ENCODE measurements at regions of chr3 and their contacts with region 1.

Region 1: DNA sequence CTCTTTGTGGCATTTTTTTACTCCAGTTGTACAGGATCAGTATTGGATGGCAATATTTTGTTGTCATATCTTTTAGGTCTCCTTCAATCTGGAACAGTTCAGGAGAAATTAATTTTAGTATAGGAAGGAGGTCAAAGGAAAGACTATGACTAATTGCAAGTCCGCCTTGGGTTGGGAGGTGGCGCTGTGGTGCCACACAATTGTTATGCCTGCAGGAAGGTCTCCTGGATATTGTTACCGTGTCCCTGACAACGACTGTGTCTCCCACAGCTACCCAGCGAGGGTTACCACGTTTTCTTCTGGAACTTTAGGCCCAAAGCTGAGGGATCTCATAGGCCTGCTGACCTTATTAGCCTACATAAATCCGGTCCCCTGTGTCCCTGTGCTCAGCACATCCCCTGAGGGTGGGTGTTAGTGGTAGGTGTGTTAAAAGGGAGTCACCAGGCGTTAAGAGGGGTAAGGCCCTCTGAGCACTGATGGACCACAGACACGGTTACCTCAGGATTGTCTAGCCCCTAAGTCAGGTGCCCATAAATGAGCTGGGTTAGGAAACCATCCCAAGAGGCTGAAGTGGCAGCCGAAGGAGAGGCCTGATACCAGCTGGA is 31.5 kb downstream of the KCNAB1 start:
- DNase-seq: peak; percentile 75
- H3K4me3 ChIP-seq: no peak overlapping the region
- H3K27ac ChIP-seq: no peak overlapping the region
- H3K4me1 ChIP-seq: peaks cover 19% of the 10 kb centered on the region
- H3K27me3 ChIP-seq: peaks cover 0 to 1% of the 10 kb centered on the region in 2 experiments
- CTCF ChIP-seq: peak; percentile 77 to 81
- POLR2A ChIP-seq: no peak

Region 2: DNA sequence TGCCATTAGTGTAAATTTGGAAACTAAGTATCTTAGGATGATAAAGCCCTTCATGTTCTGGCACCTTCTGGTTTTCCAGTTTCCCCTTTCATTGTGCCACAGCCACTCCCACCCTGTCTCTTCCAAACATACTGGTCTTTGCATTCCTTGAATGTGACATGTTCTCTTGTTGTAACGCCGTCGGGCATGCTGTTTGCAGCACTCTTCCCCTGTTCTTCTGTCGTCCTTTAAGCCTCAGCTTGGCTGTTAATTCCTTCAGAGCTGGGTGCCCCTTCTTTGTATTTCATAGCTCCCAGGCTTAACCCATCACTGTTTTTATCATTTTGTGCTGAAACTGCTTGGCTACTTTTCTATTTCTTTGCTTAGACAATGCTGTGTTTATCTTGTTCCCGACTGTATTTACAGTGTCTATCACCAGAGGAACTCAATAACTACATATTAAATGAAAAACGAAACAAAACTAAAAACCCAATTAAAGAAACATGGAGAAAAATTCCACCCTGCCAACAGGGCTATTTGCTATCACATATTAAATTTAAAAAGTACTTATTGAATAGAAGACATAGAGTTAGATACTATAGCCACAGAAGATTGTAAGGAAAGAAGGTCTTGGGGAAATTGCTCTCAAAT is 126.9 kb before region 1 on chr3:
- CTCF ChIA-PET with region 1: no interaction called
- POLR2A ChIA-PET with region 1: no interaction called
- dilution Hi-C with region 1: no loop called
- intact Hi-C with region 1: no loop called
- DNase-seq: no peak
- H3K4me3 ChIP-seq: no peak overlapping the region
- H3K27ac ChIP-seq: no peak overlapping the region
- H3K4me1 ChIP-seq: no peaks in the 10 kb centered on the region
- H3K27me3 ChIP-seq: peaks cover 8 to 26% of the 10 kb centered on the region in 2 experiments
- CTCF ChIP-seq: no peak
- POLR2A ChIP-seq: no peak

Region 3: DNA sequence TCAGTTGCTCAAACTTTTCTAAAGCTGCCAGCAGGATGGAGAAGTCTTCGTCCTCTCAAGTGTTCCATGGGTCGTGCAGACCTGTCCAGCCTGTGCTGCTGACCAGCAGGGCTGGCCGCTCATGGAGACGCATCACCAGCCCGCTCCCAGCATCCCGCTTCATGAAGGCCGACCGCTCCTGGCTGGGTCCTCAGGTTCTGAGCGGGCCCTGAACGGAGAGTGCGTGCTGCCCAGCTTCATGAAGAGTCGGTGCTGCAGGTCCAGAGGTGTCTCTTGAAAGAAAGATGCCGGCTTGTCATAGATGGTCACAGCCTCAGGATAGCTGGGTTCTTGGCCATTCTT is 107.3 kb before region 1 on chr3:
- CTCF ChIA-PET with region 1: interaction called, 20 read pairs
- POLR2A ChIA-PET with region 1: no interaction called
- dilution Hi-C with region 1: no loop called
- intact Hi-C with region 1: loop called (anchors 1 kb)
- DNase-seq: no peak
- H3K4me3 ChIP-seq: no peak overlapping the region
- H3K27ac ChIP-seq: no peak overlapping the region
- H3K4me1 ChIP-seq: no peaks in the 10 kb centered on the region
- H3K27me3 ChIP-seq: no peaks in the 10 kb centered on the region
- CTCF ChIP-seq: no peak
- POLR2A ChIP-seq: no peak

Region 4: DNA sequence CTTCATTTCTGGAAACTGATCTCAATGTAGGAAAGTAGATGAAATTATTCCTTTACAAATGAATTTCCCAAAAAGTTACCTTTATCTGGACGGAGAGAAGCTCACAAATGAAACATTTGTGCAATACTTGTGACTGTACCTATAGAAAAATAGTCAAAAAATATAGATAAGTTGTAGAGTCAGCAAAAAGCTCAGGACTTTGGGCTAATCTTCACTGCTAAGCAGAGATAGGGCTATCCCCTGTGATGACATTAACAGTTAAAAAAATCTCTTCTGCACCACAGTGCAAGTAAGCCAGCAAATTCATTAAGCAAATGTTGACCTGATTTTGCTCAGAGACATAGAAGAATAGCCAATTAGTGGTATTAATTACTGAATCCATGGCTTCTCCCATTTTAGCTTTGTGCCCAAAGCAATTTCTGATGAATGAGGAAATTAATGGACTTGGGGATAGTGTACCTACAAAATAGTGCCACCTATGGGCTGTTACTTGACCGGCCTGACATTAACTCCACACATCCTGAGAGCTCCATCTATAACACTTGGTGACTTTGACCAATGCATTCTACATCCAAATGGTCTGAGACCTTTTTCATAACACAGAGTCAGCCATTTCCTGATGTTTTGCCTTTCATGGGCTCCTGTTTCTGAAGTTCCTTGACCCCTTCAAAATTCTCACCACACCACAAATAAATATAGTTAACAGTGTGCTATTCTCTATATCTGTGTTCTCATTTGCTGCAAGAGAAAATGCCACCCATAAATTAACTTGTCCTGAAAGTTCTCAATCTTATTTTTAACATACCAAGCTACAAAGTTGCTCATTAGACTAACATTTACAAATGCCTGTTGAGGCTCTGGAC is 298.0 kb after region 1 on chr3:
- CTCF ChIA-PET with region 1: interaction called, 88 read pairs
- POLR2A ChIA-PET with region 1: no interaction called
- dilution Hi-C with region 1: no loop called
- intact Hi-C with region 1: loop called (anchors 1 kb)
- DNase-seq: peak; percentile 67
- H3K4me3 ChIP-seq: no peak overlapping the region
- H3K27ac ChIP-seq: no peak overlapping the region
- H3K4me1 ChIP-seq: peaks cover 5% of the 10 kb centered on the region
- H3K27me3 ChIP-seq: no peaks in the 10 kb centered on the region
- CTCF ChIP-seq: peak; percentile 58 to 59
- POLR2A ChIP-seq: no peak

Region 5: GRCh38 chr3:156547637-156548036 is 395.7 kb after region 1 on chr3:
- CTCF ChIA-PET with region 1: interaction called, 16 read pairs
- POLR2A ChIA-PET with region 1: no interaction called
- dilution Hi-C with region 1: no loop called
- intact Hi-C with region 1: no loop called
- DNase-seq: peak; percentile 51
- H3K4me3 ChIP-seq: no peak overlapping the region
- H3K27ac ChIP-seq: peak overlapping the region; percentile 42
- H3K4me1 ChIP-seq: peaks cover 93% of the 10 kb centered on the region
- H3K27me3 ChIP-seq: no peaks in the 10 kb centered on the region
- CTCF ChIP-seq: no peak
- POLR2A ChIP-seq: no peak

Region 6: DNA sequence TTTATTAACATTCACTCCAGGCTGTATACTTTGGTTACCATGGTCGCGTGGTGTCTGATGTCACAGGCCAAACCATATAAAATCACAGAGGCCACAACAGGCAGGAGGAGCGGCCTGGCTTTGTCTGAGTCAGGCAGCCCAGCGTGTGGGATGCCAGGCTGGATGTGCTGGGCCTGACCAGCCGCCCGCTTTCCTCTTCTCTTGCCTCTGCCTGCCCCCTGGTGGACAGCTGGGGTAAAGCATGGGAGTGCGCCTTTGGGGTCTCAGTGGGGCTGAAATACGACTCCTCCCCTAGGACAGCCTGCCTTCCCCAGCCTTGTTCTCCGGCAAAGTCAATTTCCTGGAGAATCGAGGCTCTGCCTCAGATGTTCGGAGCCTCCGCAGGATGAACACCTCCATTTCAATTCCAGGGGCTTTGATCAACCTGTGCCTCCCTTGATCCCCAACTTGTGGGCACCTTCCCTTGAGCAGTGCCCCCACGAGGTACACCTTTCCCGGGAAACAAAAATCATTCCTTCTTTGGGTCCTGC is 929.8 kb after region 1 on chr3:
- CTCF ChIA-PET with region 1: interaction called, 9 read pairs
- POLR2A ChIA-PET with region 1: no interaction called
- dilution Hi-C with region 1: no loop called
- intact Hi-C with region 1: loop called (anchors 1 kb)
- DNase-seq: peak; percentile 85
- H3K4me3 ChIP-seq: no peak overlapping the region
- H3K27ac ChIP-seq: no peak overlapping the region
- H3K4me1 ChIP-seq: no peaks in the 10 kb centered on the region
- H3K27me3 ChIP-seq: no peaks in the 10 kb centered on the region
- CTCF ChIP-seq: peak; percentile 94 to 96
- POLR2A ChIP-seq: no peak

Region 7: GRCh38 chr3:157136647-157137387 is 984.9 kb after region 1 on chr3:
- CTCF ChIA-PET with region 1: interaction called, 11 read pairs
- POLR2A ChIA-PET with region 1: no interaction called
- dilution Hi-C with region 1: no loop called
- intact Hi-C with region 1: no loop called
- DNase-seq: no peak
- H3K4me3 ChIP-seq: no peak overlapping the region
- H3K27ac ChIP-seq: no peak overlapping the region
- H3K4me1 ChIP-seq: peaks cover 6% of the 10 kb centered on the region
- H3K27me3 ChIP-seq: no peaks in the 10 kb centered on the region
- CTCF ChIP-seq: no peak
- POLR2A ChIP-seq: no peak

Measured in endothelial cell of umbilical vein (primary cell).